ENCODE measurements at regions of chr7 and their contacts with region 1.

Region 1: DNA sequence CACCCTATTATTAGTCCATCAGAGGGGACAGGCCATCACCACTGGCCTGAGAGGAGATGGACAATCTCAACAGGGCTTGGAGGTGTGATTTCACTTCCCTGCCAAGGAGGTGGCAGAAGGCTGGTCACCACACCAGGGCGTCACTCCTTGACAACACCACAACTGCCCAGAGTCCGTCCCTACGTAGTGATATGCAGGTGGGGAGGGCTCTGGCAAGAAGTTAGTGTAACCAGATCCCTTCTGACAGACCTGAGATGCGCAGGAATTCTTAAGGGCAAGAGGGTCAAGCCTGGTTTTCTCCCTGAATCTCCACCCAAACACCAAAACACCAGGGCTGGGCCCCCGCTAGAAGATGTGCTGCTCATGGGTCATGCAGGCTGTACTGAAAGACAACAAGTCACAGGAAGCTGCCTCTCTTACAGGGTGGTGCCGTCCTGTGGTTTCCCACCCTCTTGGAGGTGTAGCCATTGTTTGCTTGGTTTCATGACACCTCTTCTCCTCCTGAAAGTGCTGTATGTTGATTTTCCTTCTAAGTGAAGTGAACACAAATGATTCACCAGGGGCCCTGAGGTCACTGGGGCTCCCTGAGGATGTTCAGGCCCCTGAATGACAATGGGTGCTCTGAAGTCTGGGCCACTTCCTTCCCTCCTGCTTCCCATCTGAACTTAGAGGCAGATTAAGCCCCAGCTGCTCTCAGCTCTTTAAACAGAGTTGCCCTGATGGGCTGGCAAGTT is 27.1 kb downstream of the ATXN7L1 start:
- DNase-seq: peak; percentile 82
- ATAC-seq: peak; percentile 96
- H3K4me3 Mint-ChIP-seq: peak overlapping the region; percentile 32
- H3K27ac Mint-ChIP-seq: peak overlapping the region; percentile 59
- H3K4me1 Mint-ChIP-seq: peaks cover 52% of the 10 kb centered on the region
- H3K27me3 Mint-ChIP-seq: no peaks in the 10 kb centered on the region

Region 2: DNA sequence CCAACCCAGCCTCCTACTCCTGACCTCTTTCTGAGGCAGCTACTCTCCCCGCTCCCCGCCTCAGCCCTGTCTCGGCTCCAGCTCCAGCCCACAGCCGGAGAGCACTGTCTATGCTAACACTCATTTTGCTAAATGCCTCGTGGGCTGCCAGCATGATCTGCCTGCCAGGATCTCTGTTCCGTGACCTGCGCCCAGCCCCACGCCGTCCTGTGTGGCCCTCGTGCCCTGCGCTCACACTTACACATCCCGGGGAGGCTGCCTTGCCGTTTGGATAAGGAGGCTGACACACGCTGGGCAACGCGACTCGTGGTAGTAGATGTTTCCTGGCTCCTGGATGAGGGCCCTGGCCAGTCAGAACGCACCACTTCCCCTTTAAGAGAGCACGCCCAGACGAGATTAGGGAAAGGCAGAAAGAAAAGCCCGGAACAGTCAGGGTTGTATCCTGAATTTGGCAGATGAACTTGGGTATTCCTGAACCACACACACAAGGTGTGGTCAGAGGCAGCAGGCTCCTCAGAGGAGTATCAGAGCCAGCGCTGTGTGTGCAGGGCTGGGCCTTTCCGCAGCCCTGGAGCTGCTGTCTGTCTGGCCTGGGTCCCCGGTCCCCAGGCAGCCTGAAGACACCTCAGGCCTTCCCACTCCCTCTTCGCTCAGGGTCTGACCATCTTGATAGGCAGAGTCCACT is 170.3 kb before region 1 on chr7:
- CTCF ChIA-PET with region 1: no interaction called
- POLR2A ChIA-PET with region 1: no interaction called
- intact Hi-C with region 1: no loop called
- DNase-seq: peak; percentile 62
- ATAC-seq: peak; percentile 21
- H3K4me3 Mint-ChIP-seq: peak overlapping the region; percentile 83
- H3K27ac Mint-ChIP-seq: peak overlapping the region; percentile 93
- H3K4me1 Mint-ChIP-seq: peaks cover 63% of the 10 kb centered on the region
- H3K27me3 Mint-ChIP-seq: no peaks in the 10 kb centered on the region

Region 3: DNA sequence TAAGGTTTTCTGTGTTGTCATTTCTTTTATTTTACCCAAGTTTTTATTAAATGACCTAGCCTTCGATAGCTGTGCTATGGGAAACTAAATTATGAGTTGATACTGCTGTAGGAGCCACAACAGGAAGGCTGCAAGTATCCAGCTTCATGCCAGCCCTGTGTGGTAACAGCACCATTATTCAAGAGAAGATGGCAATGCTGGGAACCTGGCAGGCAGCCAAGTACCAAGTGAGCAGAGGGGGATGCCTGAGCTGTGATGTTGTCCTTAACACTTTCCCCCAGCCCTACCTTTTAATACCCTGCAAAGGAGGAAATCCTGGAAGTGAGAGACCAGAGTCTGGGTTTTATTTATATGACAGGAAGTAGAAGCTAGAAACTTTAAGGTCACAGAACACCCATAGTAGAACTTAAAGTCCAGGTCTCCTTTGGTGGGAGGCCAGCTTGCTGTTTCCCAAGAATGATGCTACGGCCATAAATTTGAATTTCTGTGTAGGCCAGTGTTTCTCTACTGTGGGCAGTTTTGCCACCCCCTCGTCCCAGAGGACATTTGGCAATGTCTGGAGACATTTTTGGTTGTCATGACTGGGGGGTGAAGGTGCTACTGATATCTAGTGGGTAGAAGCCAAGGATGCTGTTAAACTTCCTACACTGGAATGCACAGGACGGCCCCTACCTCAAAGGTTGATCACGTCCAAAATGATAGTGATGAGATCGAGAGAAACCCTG is 36.3 kb after region 1 on chr7:
- CTCF ChIA-PET with region 1: no interaction called
- POLR2A ChIA-PET with region 1: interaction called, 3 read pairs
- intact Hi-C with region 1: loop called (anchors 1 to 5 kb)
- DNase-seq: peak; percentile 21
- ATAC-seq: no peak
- H3K4me3 Mint-ChIP-seq: no peak overlapping the region
- H3K27ac Mint-ChIP-seq: no peak overlapping the region
- H3K4me1 Mint-ChIP-seq: peaks cover 28% of the 10 kb centered on the region
- H3K27me3 Mint-ChIP-seq: no peaks in the 10 kb centered on the region